Activated CD4-positive, alpha-beta T cell treated with anti-CD3 and anti-CD28 coated beads, Interleukin-2, amount 10 ng/mL, durations not matched to agents 7 days and 5 days (primary cell): ENCODE measurements at regions of chr11 and their contacts with region 1.

Region 1: DNA sequence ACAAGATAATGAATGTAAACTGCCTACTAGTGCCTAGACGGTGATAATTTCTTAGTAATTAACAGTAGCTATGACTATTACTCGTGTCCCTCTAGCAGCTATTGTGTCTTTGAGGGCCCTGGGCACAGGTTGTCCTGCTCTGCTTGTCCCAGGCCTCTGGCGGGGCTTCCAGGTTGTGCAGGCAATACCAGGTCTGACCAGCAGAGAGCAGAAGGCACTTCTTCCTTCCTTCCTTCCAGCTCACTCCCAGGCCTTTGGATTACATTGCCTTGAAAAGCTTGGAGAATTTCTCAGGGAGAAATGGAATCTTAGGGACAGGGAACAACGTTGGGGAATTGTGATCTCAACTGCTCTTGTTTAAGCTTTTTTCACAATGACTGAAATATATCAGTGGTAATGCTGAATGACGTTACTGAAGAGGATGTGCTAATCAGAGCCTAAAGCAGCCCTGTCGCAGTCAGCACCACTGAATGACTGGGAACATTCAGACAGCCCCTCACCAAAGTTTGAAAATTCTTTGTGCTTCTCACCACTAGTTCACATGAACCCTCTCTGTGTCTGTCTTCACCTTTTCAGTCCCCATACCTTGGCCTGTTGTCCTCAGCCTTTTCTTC is 8.4 kb upstream of the CCKBR start:
- DNase-seq: peak; percentile 58
- H3K4me3 Mint-ChIP-seq: no peak overlapping the region
- H3K27ac Mint-ChIP-seq: no peak overlapping the region
- H3K4me1 Mint-ChIP-seq: no peaks in the 10 kb centered on the region
- H3K27me3 Mint-ChIP-seq: peaks cover 2% of the 10 kb centered on the region

Region 2: DNA sequence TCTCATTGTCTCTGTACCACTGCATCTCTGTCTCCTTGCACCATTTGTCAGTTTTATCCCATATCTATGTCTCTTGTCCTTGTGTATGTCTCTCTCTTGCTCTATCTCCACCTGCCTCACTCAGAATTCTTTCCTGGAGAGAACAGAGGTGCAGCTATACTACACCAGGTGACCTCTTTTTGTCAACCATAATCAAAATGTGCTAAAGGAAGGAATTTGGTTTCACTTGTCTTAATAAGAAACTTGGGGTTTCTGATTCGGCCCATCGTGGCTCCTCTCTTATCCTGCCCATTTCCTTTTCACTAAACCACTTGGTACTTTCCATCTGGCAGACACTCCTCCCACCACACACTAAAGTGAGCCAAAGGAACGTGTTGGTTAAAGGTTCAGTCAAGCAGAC is 47.9 kb before region 1 on chr11:
- CTCF ChIA-PET with region 1: no interaction called
- POLR2A ChIA-PET with region 1: no interaction called
- DNase-seq: peak; percentile 24
- H3K4me3 Mint-ChIP-seq: no peak overlapping the region
- H3K27ac Mint-ChIP-seq: peak overlapping the region; percentile 1
- H3K4me1 Mint-ChIP-seq: peaks cover 31% of the 10 kb centered on the region
- H3K27me3 Mint-ChIP-seq: no peaks in the 10 kb centered on the region

Region 3: DNA sequence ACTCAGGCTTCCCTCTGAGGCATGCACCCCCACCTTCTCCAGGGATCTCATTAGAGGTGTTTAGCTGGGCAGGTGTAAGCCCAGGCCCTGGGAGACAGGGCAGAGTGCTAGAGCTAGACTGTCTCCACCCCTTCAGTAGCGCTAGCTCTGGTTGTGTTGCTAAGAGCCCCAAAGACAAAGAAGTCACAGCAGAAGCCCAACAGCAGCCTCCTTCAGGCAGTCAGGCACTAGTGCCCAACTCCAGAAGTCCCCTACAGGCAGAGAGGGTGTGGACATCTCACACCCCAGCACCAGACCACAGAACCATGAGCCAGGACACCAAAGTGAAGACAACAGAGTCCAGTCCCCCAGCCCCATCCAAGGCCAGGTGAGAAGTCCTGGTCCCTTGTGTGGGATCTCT is 12.3 kb before region 1 on chr11 and contains the start of gene CNGA4:
- CTCF ChIA-PET with region 1: interaction called, 13 read pairs
- POLR2A ChIA-PET with region 1: no interaction called
- DNase-seq: no peak
- H3K4me3 Mint-ChIP-seq: no peak within 1 kb of the TSS
- H3K27ac Mint-ChIP-seq: no peak within 1 kb of the TSS
- H3K4me1 Mint-ChIP-seq: peaks cover 12% of the 10 kb centered on the region
- H3K27me3 Mint-ChIP-seq: peaks cover 5% of the 10 kb centered on the region
- total RNA-seq, gene CNGA4: 0.17 TPM in 1 of 2 experiments, not detected in the other

Region 4: GRCh38 chr11:6362873-6363678 is 111.8 kb after region 1 on chr11:
- CTCF ChIA-PET with region 1: interaction called, 10 read pairs
- POLR2A ChIA-PET with region 1: no interaction called
- DNase-seq: peak; percentile 78
- H3K4me3 Mint-ChIP-seq: no peak overlapping the region
- H3K27ac Mint-ChIP-seq: no peak overlapping the region
- H3K4me1 Mint-ChIP-seq: no peaks in the 10 kb centered on the region
- H3K27me3 Mint-ChIP-seq: no peaks in the 10 kb centered on the region